ENCODE measurements at regions of chr6 and their contacts with region 1.

Region 1: DNA sequence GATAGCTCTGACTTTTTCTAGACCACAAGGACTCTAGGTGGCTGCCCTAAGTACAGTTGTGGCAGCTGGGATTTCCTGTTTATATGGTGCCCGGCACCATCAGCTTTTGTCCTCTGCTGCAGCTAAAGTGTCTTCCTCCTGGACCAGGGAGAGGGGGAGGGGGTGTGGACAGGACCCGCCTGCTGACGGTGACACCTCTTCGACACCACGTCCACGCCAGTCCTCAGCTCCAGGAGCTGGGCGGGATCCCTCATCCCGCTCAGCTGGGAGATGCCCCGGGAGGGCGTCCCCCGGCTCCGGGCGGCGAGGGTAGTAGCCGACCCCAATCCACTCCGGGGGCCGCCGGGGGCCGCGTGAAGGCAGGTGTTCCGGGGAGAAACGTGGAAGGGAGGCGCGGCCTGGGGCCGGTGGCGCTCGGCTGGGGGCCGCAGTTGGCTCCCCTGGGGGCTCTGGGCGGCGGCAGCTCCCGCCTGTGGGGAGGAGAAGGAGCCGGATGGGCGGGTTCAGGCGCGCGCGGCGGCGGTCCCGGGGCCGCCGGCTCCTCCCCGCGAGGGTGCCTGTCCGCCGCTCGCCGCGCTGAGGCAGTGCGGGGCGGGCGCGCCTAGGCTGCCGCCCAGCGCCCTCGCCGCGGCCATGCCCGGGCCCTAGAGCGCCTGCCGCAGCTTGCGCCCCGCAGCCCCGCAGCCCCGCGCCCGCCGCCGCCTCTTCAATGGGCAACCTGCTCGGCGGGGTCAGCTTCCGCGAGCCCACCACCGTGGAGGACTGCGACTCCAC is at the start of gene OGFRL1:
- DNase-seq: no peak
- ATAC-seq: peak; percentile 93
- H3K4me3 ChIP-seq: peak within 1 kb of the TSS; percentile 81
- H3K27ac ChIP-seq: peak within 1 kb of the TSS; percentile 46; the same call in 1 of the 2 replicates
- H3K4me1 ChIP-seq: peaks cover 5% of the 10 kb centered on the region; the same call in 1 of the 2 replicates
- H3K27me3 ChIP-seq: no peaks in the 10 kb centered on the region
- CTCF ChIP-seq: peak in 1 of 3 experiments; percentile 38; a peak in 1 of 6 replicates
- EP300 ChIP-seq: no peak
- POLR2A ChIP-seq: peak; percentile 72
- RAD21 ChIP-seq: no peak
- polyA plus RNA-seq, gene OGFRL1: 1.1 to 1.4 TPM

Region 2: DNA sequence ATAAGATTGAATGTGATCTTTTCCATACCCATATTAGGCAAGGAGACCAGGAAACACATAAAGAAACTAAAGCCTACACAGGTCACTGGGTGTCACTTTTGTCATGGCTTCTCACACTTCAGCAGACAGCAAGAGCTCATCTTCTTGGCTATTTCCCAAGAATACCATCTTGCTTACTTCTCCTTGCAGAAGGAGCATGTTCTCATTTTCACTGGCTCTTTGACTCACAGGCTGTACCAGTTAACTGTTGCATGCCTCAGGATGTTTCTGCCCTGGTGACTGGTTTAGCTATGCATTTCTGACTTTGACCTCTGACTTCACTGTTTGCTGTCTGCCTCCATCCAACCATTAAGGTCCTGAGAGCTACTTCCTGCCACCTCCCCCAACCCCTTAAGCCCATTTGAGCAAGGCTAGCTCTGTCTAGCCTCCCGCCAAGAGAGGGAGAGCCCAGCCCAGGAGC is 40.1 kb before region 1 on chr6:
- CTCF ChIA-PET with region 1: interaction called, 5 read pairs
- POLR2A ChIA-PET with region 1: no interaction called
- RAD21 ChIA-PET with region 1: interaction called, 7 read pairs
- SMC1A ChIA-PET with region 1: interaction called, 13 read pairs
- in situ Hi-C with region 1: no loop called
- intact Hi-C with region 1: no loop called
- DNase-seq: peak; percentile 48
- ATAC-seq: peak; percentile 97
- H3K4me3 ChIP-seq: no peak overlapping the region
- H3K27ac ChIP-seq: no peak overlapping the region
- H3K4me1 ChIP-seq: no peaks in the 10 kb centered on the region
- H3K27me3 ChIP-seq: no peaks in the 10 kb centered on the region
- CTCF ChIP-seq: peak in 1 of 3 experiments; percentile 14; a peak in 1 of 6 replicates
- EP300 ChIP-seq: no peak
- POLR2A ChIP-seq: no peak
- RAD21 ChIP-seq: 0 out of 2 replicates have a peak, but pooled peaks have one; percentile 4

Region 3: GRCh38 chr6:71268735-71269437 is 19.5 kb before region 1 on chr6:
- CTCF ChIA-PET with region 1: interaction called, 10 read pairs
- POLR2A ChIA-PET with region 1: interaction called, 6 read pairs
- RAD21 ChIA-PET with region 1: interaction called, 17 read pairs
- SMC1A ChIA-PET with region 1: interaction called, 5 read pairs
- in situ Hi-C with region 1: no loop called
- intact Hi-C with region 1: no loop called
- DNase-seq: peak; percentile 51
- ATAC-seq: peak; percentile 91
- H3K4me3 ChIP-seq: no peak overlapping the region
- H3K27ac ChIP-seq: peak overlapping the region; percentile 33; the same call in 1 of the 2 replicates
- H3K4me1 ChIP-seq: peaks cover 13% of the 10 kb centered on the region; the same call in 1 of the 2 replicates
- H3K27me3 ChIP-seq: no peaks in the 10 kb centered on the region
- CTCF ChIP-seq: no peak
- EP300 ChIP-seq: no peak
- POLR2A ChIP-seq: no peak
- RAD21 ChIP-seq: no peak

Region 4: GRCh38 chr6:71277926-71278600 is 10.4 kb before region 1 on chr6:
- CTCF ChIA-PET with region 1: interaction called, 9 read pairs
- POLR2A ChIA-PET with region 1: interaction called, 9 read pairs
- RAD21 ChIA-PET with region 1: interaction called, 14 read pairs
- SMC1A ChIA-PET with region 1: interaction called, 14 read pairs
- in situ Hi-C with region 1: no loop called
- intact Hi-C with region 1: no loop called
- DNase-seq: no peak
- ATAC-seq: peak; percentile 90
- H3K4me3 ChIP-seq: no peak overlapping the region
- H3K27ac ChIP-seq: no peak overlapping the region
- H3K4me1 ChIP-seq: no peaks in the 10 kb centered on the region
- H3K27me3 ChIP-seq: no peaks in the 10 kb centered on the region
- CTCF ChIP-seq: no peak
- EP300 ChIP-seq: no peak
- POLR2A ChIP-seq: no peak
- RAD21 ChIP-seq: no peak

Region 5: GRCh38 chr6:71321314-71321713 is 32.9 kb after region 1 on chr6:
- CTCF ChIA-PET with region 1: no interaction called
- POLR2A ChIA-PET with region 1: no interaction called
- RAD21 ChIA-PET with region 1: no interaction called
- SMC1A ChIA-PET with region 1: no interaction called
- in situ Hi-C with region 1: no loop called
- intact Hi-C with region 1: no loop called
- DNase-seq: no peak
- ATAC-seq: no peak
- H3K4me3 ChIP-seq: no peak overlapping the region
- H3K27ac ChIP-seq: no peak overlapping the region
- H3K4me1 ChIP-seq: no peaks in the 10 kb centered on the region
- H3K27me3 ChIP-seq: no peaks in the 10 kb centered on the region
- CTCF ChIP-seq: no peak
- EP300 ChIP-seq: no peak
- POLR2A ChIP-seq: no peak
- RAD21 ChIP-seq: no peak

Region 6: DNA sequence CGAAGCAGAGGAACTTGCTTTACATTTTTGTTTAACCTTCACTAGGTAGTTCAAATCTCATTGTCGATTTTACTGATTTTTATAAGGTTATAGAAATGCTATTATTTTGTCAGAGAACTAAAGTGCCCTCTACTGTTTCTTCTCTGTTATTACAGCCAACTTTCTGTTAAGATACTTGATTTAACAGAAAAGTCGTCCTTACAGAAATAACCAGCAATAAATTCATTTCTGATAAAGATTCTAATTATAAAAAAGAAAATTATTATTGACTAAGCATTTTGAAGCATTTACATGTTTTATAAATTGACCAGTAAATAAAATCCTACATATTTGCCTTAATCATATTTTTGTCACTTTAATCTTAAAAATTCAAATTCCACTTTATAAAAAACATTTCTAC is 61.0 kb after region 1 on chr6:
- CTCF ChIA-PET with region 1: no interaction called
- POLR2A ChIA-PET with region 1: interaction called, 3 read pairs
- RAD21 ChIA-PET with region 1: interaction called, 3 read pairs
- SMC1A ChIA-PET with region 1: interaction called, 3 read pairs
- in situ Hi-C with region 1: no loop called
- intact Hi-C with region 1: loop called (anchors 2 kb)
- DNase-seq: no peak
- ATAC-seq: peak; percentile 34; the same call in 1 of the 3 replicates
- H3K4me3 ChIP-seq: no peak overlapping the region
- H3K27ac ChIP-seq: no peak overlapping the region
- H3K4me1 ChIP-seq: no peaks in the 10 kb centered on the region
- H3K27me3 ChIP-seq: no peaks in the 10 kb centered on the region
- CTCF ChIP-seq: peak; percentile 46 to 57 (median 50); a peak in 4 of 6 replicates
- EP300 ChIP-seq: no peak
- POLR2A ChIP-seq: no peak
- RAD21 ChIP-seq: peak; percentile 55